Prostate gland (tissue), 2 donors: ENCODE measurements at regions of chr1 and their contacts with region 1.

Region 1: GRCh38 chr1:183821889-183822611 is 17.1 kb downstream of the RGL1 start:
- DNase-seq: no peak
- H3K4me3 ChIP-seq: no peak overlapping the region
- H3K27ac ChIP-seq: peak overlapping the region in 1 of 2 donors; percentile 36
- H3K4me1 ChIP-seq: peaks cover 3% of the 10 kb centered on the region
- H3K27me3 ChIP-seq: no peaks in the 10 kb centered on the region
- CTCF ChIP-seq: no peak
- POLR2A ChIP-seq: no peak

Region 2: GRCh38 chr1:183593356-183593755 is 228.7 kb before region 1 on chr1:
- intact Hi-C with region 1: no loop called
- DNase-seq: no peak
- H3K4me3 ChIP-seq: no peak overlapping the region
- H3K27ac ChIP-seq: no peak overlapping the region
- H3K4me1 ChIP-seq: no peaks in the 10 kb centered on the region
- H3K27me3 ChIP-seq: no peaks in the 10 kb centered on the region
- CTCF ChIP-seq: no peak
- POLR2A ChIP-seq: no peak

Region 3: GRCh38 chr1:183847641-183848040 is 25.6 kb after region 1 on chr1:
- intact Hi-C with region 1: loop called (anchors 2 kb)
- DNase-seq: no peak
- H3K4me3 ChIP-seq: no peak overlapping the region
- H3K27ac ChIP-seq: no peak overlapping the region
- H3K4me1 ChIP-seq: no peaks in the 10 kb centered on the region
- H3K27me3 ChIP-seq: no peaks in the 10 kb centered on the region
- CTCF ChIP-seq: no peak
- POLR2A ChIP-seq: no peak

Region 4: DNA sequence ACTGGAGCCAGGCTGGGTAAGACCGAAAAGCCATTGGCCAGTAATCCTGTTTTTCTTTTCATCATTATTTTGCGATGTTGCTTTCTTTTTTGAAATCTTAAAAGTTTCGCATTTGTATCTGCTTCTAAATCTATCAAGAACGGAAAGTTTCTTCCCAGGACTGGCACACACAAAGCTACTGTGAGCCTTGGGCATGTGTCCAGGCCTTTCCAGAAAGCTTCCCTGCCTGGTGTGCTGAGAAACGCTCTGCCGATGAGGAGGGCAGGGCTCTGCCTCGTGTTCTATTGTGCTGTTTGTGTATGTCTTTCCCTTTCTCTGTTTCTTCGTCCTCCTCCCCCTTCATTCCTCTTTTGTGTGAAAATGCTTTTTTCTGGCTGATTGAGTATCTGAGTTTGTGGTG is 55.3 kb after region 1 on chr1:
- intact Hi-C with region 1: loop called (anchors 5 kb)
- DNase-seq: peak; percentile 82
- H3K4me3 ChIP-seq: no peak overlapping the region
- H3K27ac ChIP-seq: peak overlapping the region; percentile 51 to 71
- H3K4me1 ChIP-seq: peaks cover 15% of the 10 kb centered on the region
- H3K27me3 ChIP-seq: no peaks in the 10 kb centered on the region
- CTCF ChIP-seq: no peak
- POLR2A ChIP-seq: no peak

Region 5: GRCh38 chr1:183891158-183891856 is 69.3 kb after region 1 on chr1:
- intact Hi-C with region 1: loop called (anchors 5 kb)
- DNase-seq: no peak
- H3K4me3 ChIP-seq: no peak overlapping the region
- H3K27ac ChIP-seq: no peak overlapping the region
- H3K4me1 ChIP-seq: peaks cover 16% of the 10 kb centered on the region
- H3K27me3 ChIP-seq: no peaks in the 10 kb centered on the region
- CTCF ChIP-seq: no peak
- POLR2A ChIP-seq: no peak